HepG2 (cell line): ENCODE measurements at regions of chr2 and their contacts with region 1.

Region 1: DNA sequence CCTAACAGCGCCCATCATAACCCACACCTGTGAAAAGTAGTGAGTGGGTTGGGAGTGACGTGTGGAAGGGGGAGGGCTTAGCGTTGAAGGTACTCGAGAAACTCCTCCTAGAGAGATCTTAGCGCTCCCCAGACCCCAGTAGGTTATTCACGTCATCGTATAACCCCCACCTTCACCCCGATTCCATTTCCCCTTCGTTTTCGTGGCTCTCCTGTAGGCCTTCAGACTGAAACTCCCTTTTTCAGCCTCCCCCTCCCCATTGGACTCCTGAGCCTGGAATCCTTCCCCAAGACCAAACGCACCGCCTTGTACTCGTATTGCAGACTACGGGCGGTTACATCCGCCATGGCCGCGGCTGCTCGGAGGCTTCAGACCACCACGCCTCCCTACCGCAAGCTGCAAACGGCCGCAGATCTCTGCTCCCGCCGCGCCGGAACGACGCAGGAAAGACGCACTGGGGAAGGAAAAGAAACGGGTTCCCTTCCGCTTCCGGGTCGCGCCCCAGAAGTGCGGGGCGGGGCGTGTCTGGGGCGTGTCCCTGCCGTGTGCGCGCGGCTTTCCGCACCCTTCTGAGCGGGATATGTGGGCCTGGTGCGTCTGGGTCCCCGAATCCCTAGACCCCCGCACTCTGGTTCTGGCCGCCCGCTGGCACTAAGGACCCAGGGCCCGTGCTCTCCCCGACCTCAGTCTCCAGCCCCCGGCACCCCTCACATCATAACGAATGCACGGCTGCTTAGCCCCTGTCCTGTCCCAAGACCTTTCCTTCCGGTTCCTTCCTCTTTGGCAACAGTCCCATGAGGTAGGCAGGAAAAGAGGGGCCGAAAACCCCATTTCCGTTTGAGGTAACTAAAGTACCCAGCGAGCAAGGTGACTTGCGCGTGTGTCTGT is at the start of gene SNRNP200:
- DNase-seq: peak; percentile 86
- ATAC-seq: peak; percentile 98
- H3K4me3 ChIP-seq: peak within 1 kb of the TSS; percentile 79 to 92 (median 91)
- H3K27ac ChIP-seq: peak within 1 kb of the TSS; percentile 75
- H3K4me1 ChIP-seq: peaks cover 37% of the 10 kb centered on the region
- H3K27me3 ChIP-seq: no peaks in the 10 kb centered on the region; a peak in 1 of 5 replicates
- CTCF ChIP-seq: peak; percentile 31
- EP300 ChIP-seq: no peak
- POLR2A ChIP-seq: peak; percentile 88 to 95
- RAD21 ChIP-seq: peak; percentile 37; the same call in 1 of the 2 replicates
- total RNA-seq, gene SNRNP200: 99.0 and 163 TPM in 2 replicates

Region 2: DNA sequence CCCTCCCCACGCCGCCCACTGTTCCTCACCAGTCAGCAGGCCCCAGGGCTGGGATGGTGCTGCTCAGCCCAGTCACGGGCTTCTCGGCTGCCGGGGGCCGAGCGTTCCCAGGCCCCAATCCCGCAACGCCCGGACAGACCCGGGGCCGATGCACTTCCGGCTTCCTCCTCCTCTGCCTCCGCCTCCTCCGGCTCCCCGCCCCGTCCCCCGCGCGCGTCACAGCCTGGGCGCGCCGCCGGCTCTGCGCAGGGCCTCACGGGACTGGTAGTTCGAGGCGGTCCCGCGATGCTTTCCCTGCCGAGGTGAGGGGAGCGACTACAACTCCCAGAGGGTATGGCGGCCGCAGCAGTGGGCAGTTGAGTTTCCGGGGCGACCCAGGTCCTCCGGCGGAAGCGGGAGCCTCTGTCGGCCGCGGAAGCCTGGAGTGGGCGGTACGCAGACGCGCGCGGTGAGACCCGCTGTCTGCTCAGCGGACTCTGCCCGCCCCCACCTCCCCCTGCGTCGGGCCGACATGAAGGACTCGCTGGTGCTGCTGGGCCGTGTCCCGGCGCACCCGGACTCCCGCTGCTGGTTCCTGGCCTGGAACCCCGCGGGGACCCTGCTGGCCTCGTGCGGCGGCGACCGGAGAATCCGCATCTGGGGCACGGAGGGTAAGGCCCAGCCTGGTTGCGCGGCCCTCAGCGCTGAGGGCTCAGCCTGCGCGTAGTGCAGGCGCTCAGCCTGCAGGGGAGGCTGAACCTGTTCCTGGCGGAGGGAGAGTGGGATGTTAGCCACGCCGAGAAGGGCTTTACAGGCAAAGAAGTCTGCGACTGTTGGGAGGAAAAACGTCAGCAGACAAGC is 39.3 kb before region 1 on chr2 and contains the starts of genes CIAO1 and TMEM127:
- CTCF ChIA-PET with region 1: no interaction called
- POLR2A ChIA-PET with region 1: interaction called, 30 read pairs
- in situ Hi-C with region 1: no loop called
- intact Hi-C with region 1: loop called (anchors 1 kb)
- DNase-seq: peak; percentile 98
- ATAC-seq: peak; percentile 90
- H3K4me3 ChIP-seq: peak within 1 kb of the TSS; percentile 95 to 97 (median 96)
- H3K27ac ChIP-seq: peak within 1 kb of the TSS; percentile 83
- H3K4me1 ChIP-seq: peaks cover 47% of the 10 kb centered on the region
- H3K27me3 ChIP-seq: no peaks in the 10 kb centered on the region; a peak in 1 of 5 replicates
- CTCF ChIP-seq: peak; percentile 58
- EP300 ChIP-seq: peak in 1 of 2 experiments; percentile 65; a peak in 2 of 4 replicates
- POLR2A ChIP-seq: peak in 1 of 2 experiments; percentile 84; a peak in 2 of 4 replicates
- RAD21 ChIP-seq: peak; percentile 67; the same call in 1 of the 2 replicates
- total RNA-seq, gene CIAO1: 99.3 and 118 TPM in 2 replicates
- total RNA-seq, gene TMEM127: 15.7 and 21.5 TPM in 2 replicates

Region 3: GRCh38 chr2:96315400-96316071 is 10.2 kb after region 1 on chr2:
- CTCF ChIA-PET with region 1: no interaction called
- POLR2A ChIA-PET with region 1: interaction called, 45 read pairs
- in situ Hi-C with region 1: no loop called
- intact Hi-C with region 1: no loop called
- DNase-seq: peak; percentile 39
- ATAC-seq: no peak
- H3K4me3 ChIP-seq: no peak overlapping the region
- H3K27ac ChIP-seq: no peak overlapping the region
- H3K4me1 ChIP-seq: peaks cover 43% of the 10 kb centered on the region
- H3K27me3 ChIP-seq: peaks cover 0 to 3% of the 10 kb centered on the region in 2 experiments; a peak in 1 of 5 replicates
- CTCF ChIP-seq: no peak
- EP300 ChIP-seq: no peak
- POLR2A ChIP-seq: no peak
- RAD21 ChIP-seq: no peak

Region 4: DNA sequence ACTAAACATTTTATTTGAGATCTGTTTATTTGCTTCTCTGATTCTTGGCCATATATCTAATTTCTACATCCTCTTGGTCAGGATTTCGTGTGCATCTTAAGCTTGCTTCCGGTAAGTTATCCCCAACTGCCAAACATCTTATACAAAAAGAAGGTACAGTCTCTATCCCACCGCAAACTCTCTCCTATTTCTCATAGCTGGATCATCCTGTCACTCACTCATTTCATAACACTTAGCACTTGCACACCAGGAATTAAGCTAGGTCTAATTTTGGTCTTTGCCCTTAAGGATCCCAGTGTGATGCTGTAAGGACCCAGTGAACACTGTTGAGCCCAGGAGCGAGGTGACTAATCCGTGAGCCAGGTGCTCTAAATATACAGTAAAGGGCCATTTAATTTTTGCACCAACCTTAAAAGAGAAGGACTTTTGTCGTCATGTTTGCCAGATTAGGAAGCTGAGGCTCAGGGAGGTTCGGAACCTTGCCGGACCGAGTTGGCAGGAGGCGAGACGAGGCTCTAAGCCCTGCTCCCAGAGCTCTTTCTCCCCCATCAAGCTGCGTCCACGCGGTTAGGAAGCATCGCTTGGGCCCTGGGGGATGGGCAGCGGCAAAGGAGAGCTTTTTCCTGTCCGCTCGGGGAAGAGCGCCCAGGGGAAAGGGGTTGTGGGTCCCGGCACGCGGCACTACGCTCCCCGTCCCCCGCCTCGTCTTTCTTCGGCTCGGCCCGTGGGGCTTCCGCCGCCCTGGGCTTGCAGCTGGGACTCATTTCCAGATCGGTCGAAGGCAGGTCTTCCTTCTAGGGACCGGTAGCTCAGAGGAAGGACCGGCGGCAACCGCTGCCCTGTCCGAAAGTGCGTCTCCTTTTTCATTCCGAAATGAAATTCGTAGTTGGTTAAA is 15.6 kb after region 1 on chr2:
- CTCF ChIA-PET with region 1: no interaction called
- POLR2A ChIA-PET with region 1: interaction called, 45 read pairs
- in situ Hi-C with region 1: no loop called
- intact Hi-C with region 1: loop called (anchors 1 kb)
- DNase-seq: no peak
- ATAC-seq: peak; percentile 24
- H3K4me3 ChIP-seq: peak overlapping the region; percentile 61 to 74 (median 67)
- H3K27ac ChIP-seq: no peak overlapping the region
- H3K4me1 ChIP-seq: peaks cover 64% of the 10 kb centered on the region
- H3K27me3 ChIP-seq: peaks cover 7 to 29% of the 10 kb centered on the region in 2 experiments; a peak in 4 of 5 replicates
- CTCF ChIP-seq: no peak
- EP300 ChIP-seq: no peak
- POLR2A ChIP-seq: no peak
- RAD21 ChIP-seq: no peak

Region 5: GRCh38 chr2:96336104-96336775 is 30.9 kb after region 1 on chr2:
- CTCF ChIA-PET with region 1: no interaction called
- POLR2A ChIA-PET with region 1: interaction called, 28 read pairs
- in situ Hi-C with region 1: no loop called
- intact Hi-C with region 1: loop called (anchors 2 kb)
- DNase-seq: no peak
- ATAC-seq: peak; percentile 28
- H3K4me3 ChIP-seq: peak overlapping the region; percentile 74 to 85 (median 81)
- H3K27ac ChIP-seq: peak overlapping the region; percentile 84
- H3K4me1 ChIP-seq: peaks cover 32% of the 10 kb centered on the region
- H3K27me3 ChIP-seq: no peaks in the 10 kb centered on the region; a peak in 1 of 5 replicates
- CTCF ChIP-seq: no peak
- EP300 ChIP-seq: no peak
- POLR2A ChIP-seq: peak; percentile 25 to 73
- RAD21 ChIP-seq: no peak

Region 6: DNA sequence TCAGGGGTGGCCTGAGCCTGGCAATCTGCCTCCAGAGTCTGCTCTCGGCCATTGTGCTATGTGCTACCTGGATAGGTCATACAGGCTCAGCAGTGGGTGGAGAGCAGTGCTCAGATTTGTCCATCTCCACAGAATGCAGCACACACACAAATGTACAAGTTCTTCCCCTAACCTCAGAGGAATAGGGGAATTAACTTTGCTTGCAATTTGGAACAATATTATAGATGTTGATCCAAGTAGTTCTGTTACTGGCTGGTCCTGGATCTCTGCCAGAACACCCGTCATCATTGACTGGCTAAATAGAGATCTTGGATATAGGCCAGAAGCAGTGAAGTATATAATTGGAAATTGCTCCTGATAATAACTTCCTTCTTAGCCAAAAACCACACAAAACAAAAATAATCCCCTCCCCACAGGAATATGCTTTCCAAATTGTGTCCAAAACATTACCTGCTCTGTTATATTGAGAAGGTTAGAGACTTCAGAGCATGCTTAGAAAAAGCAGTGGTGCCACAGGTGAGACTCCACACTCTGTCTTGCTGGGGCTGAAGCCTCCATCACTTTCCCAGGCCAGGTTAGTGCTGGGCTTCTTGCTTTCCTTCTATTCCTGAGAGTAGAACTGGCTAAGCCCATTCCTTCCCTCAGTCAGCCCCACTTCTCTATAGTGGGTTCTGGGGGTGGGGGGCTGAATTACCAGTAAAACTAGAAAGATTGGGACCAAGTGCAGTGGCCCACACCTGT is 69.0 kb after region 1 on chr2:
- CTCF ChIA-PET with region 1: no interaction called
- POLR2A ChIA-PET with region 1: no interaction called
- in situ Hi-C with region 1: no loop called
- intact Hi-C with region 1: no loop called
- DNase-seq: no peak
- ATAC-seq: peak; percentile 31; the same call in 2 of the 3 replicates
- H3K4me3 ChIP-seq: no peak overlapping the region
- H3K27ac ChIP-seq: no peak overlapping the region
- H3K4me1 ChIP-seq: no peaks in the 10 kb centered on the region
- H3K27me3 ChIP-seq: no peaks in the 10 kb centered on the region
- CTCF ChIP-seq: no peak
- EP300 ChIP-seq: no peak
- POLR2A ChIP-seq: no peak
- RAD21 ChIP-seq: no peak